ENCODE measurements at regions of chr4 and their contacts with region 1.

Region 1: DNA sequence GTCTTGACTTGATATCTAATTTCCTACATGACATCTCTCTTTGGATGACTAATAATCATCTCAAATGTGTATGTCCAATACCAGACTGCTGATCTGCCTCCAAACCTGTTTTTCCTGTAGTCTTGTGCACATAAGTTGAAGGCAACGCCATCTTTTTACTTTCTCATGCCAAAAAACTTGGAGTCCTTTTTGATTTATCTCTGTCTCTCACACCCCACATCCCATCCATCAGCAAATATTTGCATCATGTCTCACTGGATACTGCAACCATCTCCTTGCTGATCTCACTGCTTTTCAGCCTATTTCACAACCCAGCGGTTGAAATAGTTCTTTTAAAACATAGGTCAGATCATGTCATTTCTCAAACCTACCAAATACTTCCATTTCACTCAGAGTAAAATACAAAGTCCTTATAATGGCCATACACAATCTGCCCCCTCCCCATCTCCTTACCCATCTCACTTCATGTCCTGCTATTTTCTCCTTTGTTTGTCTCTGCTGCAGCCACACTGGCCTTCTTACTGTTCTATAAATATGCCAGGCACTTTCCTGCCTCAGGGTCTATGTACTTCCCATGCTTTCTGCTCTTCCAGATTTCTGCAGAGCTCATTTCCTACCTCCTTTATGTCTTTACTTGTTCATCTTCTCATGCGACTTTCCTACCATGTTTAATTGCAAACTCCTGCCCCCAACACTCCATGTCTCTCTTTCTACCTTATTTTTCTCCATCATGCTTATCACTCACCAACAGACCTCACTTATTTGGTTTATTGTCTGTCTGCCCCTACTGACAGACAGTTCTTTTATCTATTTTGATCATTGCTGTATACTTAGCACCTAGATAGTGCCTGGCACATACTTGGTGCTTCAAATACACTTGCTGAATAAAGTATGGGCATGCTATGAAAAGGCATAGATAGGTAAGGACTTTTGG is 98.8 kb downstream of the ANXA3 start:
- DNase-seq: peak; percentile 82
- H3K4me3 Mint-ChIP-seq: no peak overlapping the region
- H3K27ac Mint-ChIP-seq: peak overlapping the region; percentile 26
- H3K4me1 Mint-ChIP-seq: peaks cover 38% of the 10 kb centered on the region
- H3K27me3 Mint-ChIP-seq: no peaks in the 10 kb centered on the region
- CTCF ChIP-seq: no peak

Region 2: GRCh38 chr4:78661921-78662521 is 11.7 kb after region 1 on chr4:
- CTCF ChIA-PET with region 1: interaction called, 6 read pairs
- POLR2A ChIA-PET with region 1: interaction called, 31 read pairs
- intact Hi-C with region 1: no loop called
- DNase-seq: peak; percentile 69
- H3K4me3 Mint-ChIP-seq: no peak overlapping the region
- H3K27ac Mint-ChIP-seq: no peak overlapping the region
- H3K4me1 Mint-ChIP-seq: peaks cover 42% of the 10 kb centered on the region
- H3K27me3 Mint-ChIP-seq: no peaks in the 10 kb centered on the region
- CTCF ChIP-seq: no peak

Region 3: GRCh38 chr4:78667764-78668163 is 17.4 kb after region 1 on chr4:
- CTCF ChIA-PET with region 1: interaction called, 6 read pairs
- POLR2A ChIA-PET with region 1: interaction called, 31 read pairs
- intact Hi-C with region 1: no loop called
- DNase-seq: no peak
- H3K4me3 Mint-ChIP-seq: no peak overlapping the region
- H3K27ac Mint-ChIP-seq: no peak overlapping the region
- H3K4me1 Mint-ChIP-seq: peaks cover 15% of the 10 kb centered on the region
- H3K27me3 Mint-ChIP-seq: no peaks in the 10 kb centered on the region
- CTCF ChIP-seq: no peak

Region 4: DNA sequence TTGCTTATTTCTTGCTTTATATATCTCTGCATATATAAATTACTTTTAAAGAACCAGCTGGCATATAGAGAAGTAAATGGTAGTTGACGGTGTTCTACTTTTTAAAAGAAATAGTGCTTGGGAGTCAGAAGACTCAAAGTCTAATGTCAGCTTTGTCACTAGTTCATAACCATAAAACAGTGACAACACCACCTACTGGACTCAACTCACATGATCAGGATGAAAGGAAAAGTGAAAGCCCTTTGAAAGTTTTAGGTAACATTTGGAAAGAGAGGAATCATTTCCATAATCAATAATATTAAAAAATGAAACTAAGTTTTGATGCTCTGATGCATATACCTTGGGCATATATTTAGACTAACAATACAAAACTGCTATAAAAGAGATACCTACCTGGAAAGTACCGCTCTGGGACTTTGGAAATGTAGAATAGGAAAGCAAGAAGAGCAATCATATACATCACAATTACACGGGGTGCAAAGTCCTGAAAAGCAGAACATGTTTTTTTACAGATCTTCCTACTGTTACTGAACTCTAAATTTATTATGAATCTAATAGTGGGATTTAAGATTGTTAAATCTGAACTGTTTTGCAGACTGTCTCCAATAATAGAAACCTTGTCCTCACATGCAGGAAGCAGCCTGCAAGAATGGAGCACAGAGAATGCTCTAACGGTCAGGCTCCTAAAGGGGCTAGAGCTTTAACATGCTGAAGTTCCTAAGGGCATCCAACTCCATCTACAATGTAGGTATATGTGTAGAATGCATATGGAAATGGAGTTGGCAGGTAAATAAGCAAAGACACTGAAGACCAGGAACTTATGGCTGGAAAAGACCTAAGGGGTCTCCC is 273.3 kb after region 1 on chr4:
- CTCF ChIA-PET with region 1: no interaction called
- POLR2A ChIA-PET with region 1: no interaction called
- intact Hi-C with region 1: no loop called
- DNase-seq: no peak
- H3K4me3 Mint-ChIP-seq: no peak overlapping the region
- H3K27ac Mint-ChIP-seq: peak overlapping the region; percentile 31
- H3K4me1 Mint-ChIP-seq: no peaks in the 10 kb centered on the region
- H3K27me3 Mint-ChIP-seq: no peaks in the 10 kb centered on the region
- CTCF ChIP-seq: no peak

Region 5: GRCh38 chr4:79042079-79042674 is 391.8 kb after region 1 on chr4:
- CTCF ChIA-PET with region 1: no interaction called
- POLR2A ChIA-PET with region 1: no interaction called
- intact Hi-C with region 1: no loop called
- DNase-seq: peak; percentile 59
- H3K4me3 Mint-ChIP-seq: no peak overlapping the region
- H3K27ac Mint-ChIP-seq: no peak overlapping the region
- H3K4me1 Mint-ChIP-seq: no peaks in the 10 kb centered on the region
- H3K27me3 Mint-ChIP-seq: no peaks in the 10 kb centered on the region
- CTCF ChIP-seq: peak; percentile 56

Region 6: DNA sequence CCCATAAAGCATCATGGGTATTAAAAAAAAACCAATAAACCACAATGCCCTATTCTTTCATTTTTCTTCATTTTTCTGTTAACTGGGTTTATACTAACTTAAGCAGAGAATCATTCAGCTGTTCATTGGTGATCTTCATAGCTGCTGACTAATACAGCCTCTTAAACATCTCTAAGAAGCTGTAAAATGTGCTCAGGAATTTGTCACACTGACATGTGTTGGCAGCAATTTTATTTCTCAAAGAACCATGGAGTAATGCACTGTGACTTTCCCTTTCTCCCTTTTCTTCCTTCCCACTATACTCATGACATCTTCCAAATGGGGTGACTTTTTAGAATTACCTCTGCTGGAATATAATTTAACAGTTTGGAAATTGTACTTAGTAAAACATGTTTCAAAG is 1107.2 kb after region 1 on chr4:
- CTCF ChIA-PET with region 1: no interaction called
- POLR2A ChIA-PET with region 1: no interaction called
- intact Hi-C with region 1: no loop called
- DNase-seq: no peak
- H3K4me3 Mint-ChIP-seq: no peak overlapping the region
- H3K27ac Mint-ChIP-seq: no peak overlapping the region
- H3K4me1 Mint-ChIP-seq: no peaks in the 10 kb centered on the region
- H3K27me3 Mint-ChIP-seq: no peaks in the 10 kb centered on the region
- CTCF ChIP-seq: no peak

Measured in MCF 10A (cell line).